ENCODE measurements at regions of chr3 and their contacts with region 1.

Region 1: GRCh38 chr3:17243621-17244020 is 358.9 kb downstream of the PLCL2 start:
- DNase-seq: no peak
- CTCF ChIP-seq: no peak

Region 2: GRCh38 chr3:17407576-17407975 is 164.0 kb after region 1 on chr3:
- in situ Hi-C with region 1: loop called (anchors 10 kb)
- DNase-seq: no peak
- CTCF ChIP-seq: no peak